ENCODE measurements at regions of chr6 and their contacts with region 1.

Region 1: GRCh38 chr6:170516783-170517616 is 36.1 kb downstream of the PSMB1 start:
- DNase-seq: peak; percentile 61
- ATAC-seq: peak; percentile 89
- H3K4me3 Mint-ChIP-seq: peak overlapping the region; percentile 20
- H3K27ac Mint-ChIP-seq: no peak overlapping the region
- H3K4me1 Mint-ChIP-seq: peaks cover 9% of the 10 kb centered on the region
- H3K27me3 Mint-ChIP-seq: peaks cover 75% of the 10 kb centered on the region

Region 2: DNA sequence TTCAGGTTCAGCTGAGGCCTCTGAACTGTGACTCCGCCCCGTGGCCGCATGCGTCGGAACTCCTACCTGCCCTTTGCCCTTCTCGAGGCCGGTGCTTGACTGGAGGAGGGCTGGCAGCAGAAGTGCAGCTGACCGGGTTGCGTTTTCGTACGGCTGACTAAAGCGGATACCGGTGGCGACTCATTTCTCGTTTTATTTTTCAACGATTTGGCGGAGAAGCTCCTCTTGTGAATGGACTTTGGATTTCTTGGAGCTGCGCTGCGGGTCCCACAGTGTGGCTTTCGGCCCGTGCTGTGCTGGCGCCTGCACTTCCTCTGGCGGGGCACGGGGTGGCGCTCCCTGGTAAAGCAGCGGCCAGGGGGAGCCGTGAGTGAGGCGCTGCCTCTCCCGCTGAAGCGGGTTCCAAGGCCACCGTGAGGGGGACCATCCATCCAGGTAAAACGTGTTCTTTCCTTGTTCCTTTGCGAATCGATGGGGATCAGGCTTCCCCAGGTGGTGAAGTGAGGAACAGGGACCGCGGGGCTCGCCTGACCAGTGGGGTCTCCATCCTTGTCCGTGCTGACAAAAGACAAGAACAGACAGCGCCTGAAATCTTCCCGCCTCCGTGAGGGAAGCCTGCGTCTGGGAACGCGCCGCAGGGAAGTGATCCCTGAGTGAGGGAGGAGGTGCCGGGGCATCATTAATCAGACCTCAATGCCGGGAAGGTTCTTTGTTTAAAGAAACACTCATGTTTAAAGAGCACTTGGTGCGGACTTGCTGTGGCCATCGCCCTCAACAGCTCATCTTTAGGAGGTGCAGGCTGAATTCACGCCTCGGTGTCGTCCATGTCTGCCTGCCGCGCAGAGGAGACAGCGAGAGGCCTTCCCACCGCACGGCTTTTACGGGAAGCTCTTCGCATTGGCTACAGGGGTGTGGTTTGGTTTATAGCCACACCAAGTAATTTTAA is 726.7 kb before region 1 on chr6:
- CTCF ChIA-PET with region 1: interaction called, 19 read pairs
- DNase-seq: peak; percentile 79
- ATAC-seq: peak; percentile 98
- H3K4me3 Mint-ChIP-seq: peak overlapping the region; percentile 67
- H3K27ac Mint-ChIP-seq: no peak overlapping the region
- H3K4me1 Mint-ChIP-seq: peaks cover 15% of the 10 kb centered on the region
- H3K27me3 Mint-ChIP-seq: peaks cover 53% of the 10 kb centered on the region

Region 3: DNA sequence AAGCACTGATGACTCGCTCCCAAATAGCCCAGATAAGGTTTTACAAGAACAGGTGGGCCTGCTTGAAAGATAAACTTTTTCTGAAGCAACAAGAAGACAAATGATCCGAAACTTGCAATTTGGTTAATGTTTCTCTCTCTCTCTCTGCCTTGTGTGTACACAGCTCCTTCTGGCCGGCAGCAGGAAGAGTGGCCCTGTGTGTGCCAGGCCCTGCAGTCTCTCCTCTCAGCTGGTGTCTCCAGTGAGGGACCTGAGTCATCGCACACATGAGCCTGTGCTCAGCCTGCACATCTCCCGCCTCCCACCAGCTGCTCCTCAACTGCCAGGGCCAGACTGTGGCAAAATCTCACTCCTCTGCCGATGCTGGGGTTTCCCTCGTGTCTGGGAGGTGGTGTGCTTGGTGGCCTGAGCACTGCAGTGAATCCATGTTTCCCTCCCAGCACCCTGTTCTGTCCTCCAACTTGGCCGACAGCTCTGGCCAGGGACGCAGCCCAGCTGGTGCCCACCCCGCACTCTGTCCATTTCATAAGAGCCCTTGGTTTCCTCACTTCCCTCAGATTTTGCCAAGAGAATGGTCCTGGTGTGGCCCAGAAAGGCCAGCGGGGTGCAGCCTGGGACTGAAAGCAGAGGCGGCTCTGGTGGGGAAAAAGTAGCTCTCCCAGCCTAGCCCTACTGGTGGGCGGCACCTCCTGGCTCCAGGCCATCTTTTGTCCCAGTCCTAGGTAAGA is 716.2 kb before region 1 on chr6:
- CTCF ChIA-PET with region 1: interaction called, 11 read pairs
- DNase-seq: peak; percentile 30
- ATAC-seq: no peak
- H3K4me3 Mint-ChIP-seq: no peak overlapping the region
- H3K27ac Mint-ChIP-seq: no peak overlapping the region
- H3K4me1 Mint-ChIP-seq: peaks cover 34% of the 10 kb centered on the region
- H3K27me3 Mint-ChIP-seq: peaks cover 76% of the 10 kb centered on the region

Region 4: GRCh38 chr6:169950558-169950957 is 566.4 kb before region 1 on chr6:
- CTCF ChIA-PET with region 1: interaction called, 10 read pairs
- DNase-seq: peak; percentile 55
- ATAC-seq: no peak
- H3K4me3 Mint-ChIP-seq: no peak overlapping the region
- H3K27ac Mint-ChIP-seq: no peak overlapping the region
- H3K4me1 Mint-ChIP-seq: peaks cover 11% of the 10 kb centered on the region
- H3K27me3 Mint-ChIP-seq: peaks cover 44% of the 10 kb centered on the region

Region 5: GRCh38 chr6:170545405-170545804 is 28.4 kb after region 1 on chr6:
- CTCF ChIA-PET with region 1: no interaction called
- DNase-seq: no peak
- ATAC-seq: no peak
- H3K4me3 Mint-ChIP-seq: no peak overlapping the region
- H3K27ac Mint-ChIP-seq: no peak overlapping the region
- H3K4me1 Mint-ChIP-seq: peaks cover 28% of the 10 kb centered on the region
- H3K27me3 Mint-ChIP-seq: no peaks in the 10 kb centered on the region

Measured in activated CD8-positive, alpha-beta memory T cell treated with anti-CD3 and anti-CD28 coated beads, Interleukin-2, amount 10 ng/mL, durations not matched to agents 7 days and 5 days (primary cell).